Activated CD4-positive, alpha-beta memory T cell treated with anti-CD3 and anti-CD28 coated beads, Interleukin-2, amount 10 ng/mL, durations not matched to agents 7 days and 5 days (primary cell): ENCODE measurements at regions of chr10 and their contacts with region 1.

Region 1: GRCh38 chr10:97412891-97413304 is 11.8 kb upstream of the RRP12 start:
- DNase-seq: peak; percentile 66
- H3K4me3 Mint-ChIP-seq: peak overlapping the region; percentile 39
- H3K27ac Mint-ChIP-seq: peak overlapping the region; percentile 83
- H3K4me1 Mint-ChIP-seq: peaks cover 63% of the 10 kb centered on the region
- H3K27me3 Mint-ChIP-seq: no peaks in the 10 kb centered on the region

Region 2: GRCh38 chr10:97388152-97388551 is 24.7 kb before region 1 on chr10:
- CTCF ChIA-PET with region 1: no interaction called
- POLR2A ChIA-PET with region 1: no interaction called
- DNase-seq: no peak
- H3K4me3 Mint-ChIP-seq: no peak overlapping the region
- H3K27ac Mint-ChIP-seq: no peak overlapping the region
- H3K4me1 Mint-ChIP-seq: peaks cover 2% of the 10 kb centered on the region
- H3K27me3 Mint-ChIP-seq: no peaks in the 10 kb centered on the region

Region 3: GRCh38 chr10:97400665-97401454 is 12.0 kb before region 1 on chr10 and contains the start of gene RRP12:
- CTCF ChIA-PET with region 1: interaction called, 68 read pairs
- POLR2A ChIA-PET with region 1: interaction called, 30 read pairs
- DNase-seq: peak; percentile 88
- H3K4me3 Mint-ChIP-seq: peak within 1 kb of the TSS; percentile 93
- H3K27ac Mint-ChIP-seq: peak within 1 kb of the TSS; percentile 92
- H3K4me1 Mint-ChIP-seq: peaks cover 20% of the 10 kb centered on the region
- H3K27me3 Mint-ChIP-seq: no peaks in the 10 kb centered on the region
- total RNA-seq, gene RRP12: 16.2 to 18.1 TPM

Region 4: GRCh38 chr10:97445722-97446639 is 33.1 kb after region 1 on chr10 and contains the starts of genes EXOSC1 and ZDHHC16:
- CTCF ChIA-PET with region 1: interaction called, 6 read pairs
- POLR2A ChIA-PET with region 1: interaction called, 13 read pairs
- DNase-seq: peak; percentile 93
- H3K4me3 Mint-ChIP-seq: peak within 1 kb of the TSS; percentile 89
- H3K27ac Mint-ChIP-seq: peak within 1 kb of the TSS; percentile 85
- H3K4me1 Mint-ChIP-seq: peaks cover 55% of the 10 kb centered on the region
- H3K27me3 Mint-ChIP-seq: no peaks in the 10 kb centered on the region
- total RNA-seq, gene EXOSC1: 49.3 to 49.8 TPM
- total RNA-seq, gene ZDHHC16: 33.9 to 35.7 TPM

Region 5: DNA sequence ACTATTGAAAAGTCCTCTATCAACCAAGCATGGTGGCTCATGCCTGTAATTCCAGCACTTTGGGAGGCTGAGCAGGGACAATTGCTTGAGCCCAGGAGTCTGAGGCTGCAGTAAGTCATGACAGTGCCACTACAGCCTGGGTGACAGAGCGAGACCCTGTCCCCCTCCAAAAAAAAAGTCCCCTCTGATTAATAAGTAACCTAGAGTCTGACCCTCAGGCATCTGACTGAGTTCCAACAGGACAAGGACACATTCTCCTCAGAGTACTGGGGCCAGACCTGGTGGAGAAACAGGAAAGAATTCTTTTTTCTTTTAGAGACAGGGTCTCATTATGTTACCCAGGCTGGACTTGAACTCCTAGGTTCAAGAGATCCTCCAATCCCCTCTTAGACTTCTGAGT is 210.4 kb after region 1 on chr10:
- CTCF ChIA-PET with region 1: no interaction called
- POLR2A ChIA-PET with region 1: no interaction called
- DNase-seq: no peak
- H3K4me3 Mint-ChIP-seq: no peak overlapping the region
- H3K27ac Mint-ChIP-seq: no peak overlapping the region
- H3K4me1 Mint-ChIP-seq: no peaks in the 10 kb centered on the region
- H3K27me3 Mint-ChIP-seq: no peaks in the 10 kb centered on the region

Region 6: GRCh38 chr10:97810446-97810845 is 397.5 kb after region 1 on chr10:
- CTCF ChIA-PET with region 1: no interaction called
- POLR2A ChIA-PET with region 1: no interaction called
- DNase-seq: no peak
- H3K4me3 Mint-ChIP-seq: no peak overlapping the region
- H3K27ac Mint-ChIP-seq: no peak overlapping the region
- H3K4me1 Mint-ChIP-seq: no peaks in the 10 kb centered on the region
- H3K27me3 Mint-ChIP-seq: peaks cover 6% of the 10 kb centered on the region